ENCODE measurements at regions of chr3 and their contacts with region 1.

Region 1: GRCh38 chr3:129840707-129841360 is 52.7 kb downstream of the TMCC1 start:
- DNase-seq: no peak
- H3K4me3 ChIP-seq: no peak overlapping the region
- H3K27ac ChIP-seq: no peak overlapping the region
- H3K4me1 ChIP-seq: no peaks in the 10 kb centered on the region
- H3K27me3 ChIP-seq: no peaks in the 10 kb centered on the region
- CTCF ChIP-seq: no peak
- POLR2A ChIP-seq: no peak

Region 2: DNA sequence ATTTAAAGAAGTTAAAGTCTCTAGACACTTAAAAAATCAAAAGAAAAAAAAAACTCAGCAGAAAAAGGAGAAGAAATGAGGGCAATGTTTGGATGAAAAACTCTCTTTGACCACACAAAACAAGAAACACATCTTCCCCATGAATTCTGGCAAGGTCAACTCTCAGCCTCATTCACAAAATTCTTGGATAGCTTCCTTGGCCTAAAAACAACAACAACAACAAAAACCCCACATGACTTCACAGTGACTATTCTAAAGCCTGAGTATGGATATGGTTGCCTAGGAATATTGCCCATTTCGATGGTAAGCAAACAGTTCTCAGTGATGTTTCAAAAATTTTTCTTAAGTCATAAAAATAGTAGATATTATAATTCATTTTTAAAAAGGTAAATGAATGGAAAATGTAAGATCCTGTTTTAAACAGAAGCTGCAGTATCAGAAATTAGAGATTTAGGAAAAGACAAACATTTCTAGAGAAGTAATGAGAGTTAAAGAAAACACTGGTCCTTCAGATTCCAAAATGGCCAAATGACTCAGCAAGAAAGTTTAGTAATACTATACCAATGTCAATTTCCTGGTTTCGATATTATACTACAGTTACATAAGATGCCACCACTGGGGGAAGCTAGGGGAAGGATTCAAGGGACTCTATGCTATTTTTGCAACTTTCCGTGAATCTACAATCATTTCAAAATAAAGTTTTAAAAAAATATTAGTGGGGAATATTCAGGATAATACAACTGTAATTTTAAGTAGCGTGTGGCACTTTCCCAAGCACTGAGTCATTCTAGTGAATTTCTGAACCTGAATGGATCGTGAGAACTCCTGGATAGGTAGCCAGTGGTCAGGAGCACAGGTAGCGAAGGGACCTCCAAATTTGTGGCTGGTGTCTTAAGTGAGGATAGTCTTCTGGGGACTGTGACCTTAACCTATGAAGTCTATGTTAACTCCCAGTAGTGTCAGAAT is 14.9 kb after region 1 on chr3:
- CTCF ChIA-PET with region 1: no interaction called
- POLR2A ChIA-PET with region 1: no interaction called
- dilution Hi-C with region 1: no loop called
- intact Hi-C with region 1: no loop called
- DNase-seq: peak; percentile 32
- H3K4me3 ChIP-seq: no peak overlapping the region
- H3K27ac ChIP-seq: peak overlapping the region; percentile 52
- H3K4me1 ChIP-seq: peaks cover 7% of the 10 kb centered on the region
- H3K27me3 ChIP-seq: no peaks in the 10 kb centered on the region
- CTCF ChIP-seq: no peak
- POLR2A ChIP-seq: no peak

Region 3: GRCh38 chr3:130093741-130094391 is 253.0 kb after region 1 on chr3:
- CTCF ChIA-PET with region 1: no interaction called
- POLR2A ChIA-PET with region 1: no interaction called
- dilution Hi-C with region 1: no loop called
- intact Hi-C with region 1: loop called (anchors 5 kb)
- DNase-seq: no peak
- H3K4me3 ChIP-seq: no peak overlapping the region
- H3K27ac ChIP-seq: no peak overlapping the region
- H3K4me1 ChIP-seq: no peaks in the 10 kb centered on the region
- H3K27me3 ChIP-seq: no peaks in the 10 kb centered on the region
- CTCF ChIP-seq: no peak
- POLR2A ChIP-seq: no peak

Measured in endothelial cell of umbilical vein (primary cell).